Sigmoid colon (tissue), 7 donors: ENCODE measurements at regions of chr20 and their contacts with region 1.

Region 1: GRCh38 chr20:32465092-32465900 is 107.2 kb downstream of the ASXL1 start:
- DNase-seq: peak; percentile 92
- H3K4me3 ChIP-seq: no peak overlapping the region
- H3K27ac ChIP-seq: peak overlapping the region; percentile 81 to 97 (median 92)
- H3K4me1 ChIP-seq: peaks cover 0 to 89% (median 86%) of the 10 kb centered on the region in 4 donors
- H3K27me3 ChIP-seq: no peaks in the 10 kb centered on the region
- CTCF ChIP-seq: no peak
- EP300 ChIP-seq: peak in 1 of 4 donors; percentile 37
- POLR2A ChIP-seq: no peak

Region 2: DNA sequence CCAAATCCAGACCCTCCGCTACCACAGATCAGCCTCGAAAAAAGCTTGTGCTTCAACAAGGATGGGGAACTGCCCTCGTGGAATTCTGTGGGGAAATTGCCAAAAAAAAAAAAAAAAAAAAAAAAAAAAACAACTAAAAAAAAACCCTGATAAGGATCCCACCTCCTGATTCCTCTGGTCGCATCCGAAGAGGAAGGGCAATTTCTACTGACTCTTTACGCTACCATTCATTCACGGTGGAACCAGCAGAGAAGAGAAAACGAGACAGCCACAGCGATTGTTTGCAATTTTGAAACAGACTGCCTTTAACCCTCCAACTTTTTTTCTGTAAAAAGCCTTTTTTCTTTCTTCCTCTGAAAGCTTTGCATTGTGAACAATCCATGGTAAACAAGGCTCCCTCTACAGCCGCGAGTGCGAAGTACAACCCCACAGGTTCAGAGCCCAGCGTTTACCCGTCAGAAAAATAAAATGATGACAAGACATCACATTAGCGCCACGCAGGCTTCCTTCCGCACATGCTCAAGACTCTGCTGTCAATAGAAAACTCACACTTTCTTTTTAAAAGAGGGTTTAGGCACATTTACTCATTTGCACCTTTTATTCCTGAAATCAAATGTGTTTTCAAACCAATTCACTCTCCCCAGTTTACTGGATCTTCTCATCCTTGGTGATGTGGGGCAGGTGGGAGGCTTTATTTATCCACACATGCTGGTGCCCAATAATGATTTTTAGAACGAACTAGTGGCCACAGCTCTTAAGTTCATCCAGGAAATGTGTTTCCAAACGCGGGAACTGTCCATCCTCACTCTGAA is 19.9 kb after region 1 on chr20:
- intact Hi-C with region 1: loop called (anchors 2 kb)
- DNase-seq: peak; percentile 86
- H3K4me3 ChIP-seq: peak overlapping the region; percentile 74 to 97 (median 96)
- H3K27ac ChIP-seq: peak overlapping the region; percentile 85 to 97 (median 94)
- H3K4me1 ChIP-seq: peaks cover 0 to 40% (median 31%) of the 10 kb centered on the region in 4 donors
- H3K27me3 ChIP-seq: no peaks in the 10 kb centered on the region
- CTCF ChIP-seq: peak; percentile 70 to 90 (median 84)
- EP300 ChIP-seq: no peak
- POLR2A ChIP-seq: no peak